Gastrocnemius medialis (tissue), 4 donors: ENCODE measurements at regions of chr1 and their contacts with region 1.

Region 1: GRCh38 chr1:103256490-103256889 is 148.2 kb upstream of the COL11A1 start:
- DNase-seq: no peak
- ATAC-seq: no peak
- H3K4me3 ChIP-seq: no peak overlapping the region
- H3K27ac ChIP-seq: no peak overlapping the region
- H3K4me1 ChIP-seq: no peaks in the 10 kb centered on the region
- H3K27me3 ChIP-seq: no peaks in the 10 kb centered on the region
- CTCF ChIP-seq: no peak
- POLR2A ChIP-seq: no peak

Region 2: DNA sequence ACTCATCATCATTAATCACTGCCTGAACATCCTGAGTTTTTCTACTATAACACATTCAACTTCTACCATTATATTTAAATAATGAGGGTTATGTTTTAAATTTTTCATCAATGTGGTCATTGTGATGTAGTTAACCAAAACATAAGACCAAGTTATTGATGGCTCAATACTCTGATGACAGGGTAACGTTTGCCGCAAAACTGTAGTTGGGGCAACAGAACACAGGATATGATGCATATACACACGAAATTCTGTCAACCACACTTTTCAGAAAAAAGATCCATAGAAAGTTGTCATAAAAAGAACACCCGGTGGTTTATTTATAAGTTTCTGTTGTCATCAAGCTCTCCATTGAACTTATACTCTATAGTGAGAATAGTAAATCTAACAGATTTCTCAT is 26.4 kb before region 1 on chr1:
- in situ Hi-C with region 1: no loop called
- intact Hi-C with region 1: loop called (anchors 2 kb)
- DNase-seq: no peak
- ATAC-seq: no peak
- H3K4me3 ChIP-seq: no peak overlapping the region
- H3K27ac ChIP-seq: no peak overlapping the region
- H3K4me1 ChIP-seq: no peaks in the 10 kb centered on the region
- H3K27me3 ChIP-seq: no peaks in the 10 kb centered on the region
- CTCF ChIP-seq: no peak
- POLR2A ChIP-seq: no peak

Region 3: GRCh38 chr1:103371234-103371633 is 114.7 kb after region 1 on chr1:
- in situ Hi-C with region 1: no loop called
- intact Hi-C with region 1: no loop called
- DNase-seq: peak; percentile 9 to 28
- ATAC-seq: no peak
- H3K4me3 ChIP-seq: no peak overlapping the region
- H3K27ac ChIP-seq: no peak overlapping the region
- H3K4me1 ChIP-seq: no peaks in the 10 kb centered on the region
- H3K27me3 ChIP-seq: no peaks in the 10 kb centered on the region
- CTCF ChIP-seq: no peak
- POLR2A ChIP-seq: no peak